Mammary epithelial cell (primary cell): ENCODE measurements at regions of chr10 and their contacts with region 1.

Region 1: GRCh38 chr10:6786579-6787031 is 206.5 kb upstream of the PRKCQ start:
- DNase-seq: peak; percentile 48
- H3K4me3 ChIP-seq: peak overlapping the region in 1 of 3 experiments; percentile 10
- H3K27ac ChIP-seq: no peak overlapping the region
- H3K4me1 ChIP-seq: peaks cover 22% of the 10 kb centered on the region
- H3K27me3 ChIP-seq: no peaks in the 10 kb centered on the region
- CTCF ChIP-seq: peak; percentile 48 to 66

Region 2: GRCh38 chr10:6542999-6543430 is 243.6 kb before region 1 on chr10:
- CTCF ChIA-PET with region 1: no interaction called
- dilution Hi-C with region 1: no loop called
- in situ Hi-C with region 1: no loop called
- intact Hi-C with region 1: no loop called
- DNase-seq: no peak
- H3K4me3 ChIP-seq: no peak overlapping the region
- H3K27ac ChIP-seq: no peak overlapping the region
- H3K4me1 ChIP-seq: no peaks in the 10 kb centered on the region
- H3K27me3 ChIP-seq: no peaks in the 10 kb centered on the region
- CTCF ChIP-seq: no peak

Region 3: DNA sequence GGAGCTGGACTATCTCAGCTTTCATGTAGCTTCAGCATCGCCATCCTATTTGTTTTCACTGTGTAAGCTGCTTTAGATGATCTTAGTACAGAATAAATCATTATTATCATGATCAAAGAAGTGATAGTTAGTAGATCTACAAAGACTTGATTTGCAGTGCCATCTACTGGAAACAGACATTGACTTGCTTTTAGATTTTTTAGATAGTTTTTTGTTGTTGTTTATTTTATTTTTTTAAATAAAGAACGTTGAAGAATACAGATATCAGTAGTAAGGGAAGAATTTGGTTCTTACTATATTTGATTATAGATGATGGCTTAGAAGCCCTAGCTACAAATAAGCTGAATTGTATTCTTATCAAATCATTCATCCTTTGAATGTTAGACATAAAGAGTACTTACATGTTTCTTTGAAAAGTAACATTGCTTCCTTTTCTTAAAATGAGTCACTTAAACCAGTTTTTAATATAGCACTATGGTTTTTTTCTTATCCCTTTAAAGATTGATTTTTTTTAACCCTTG is 630.6 kb after region 1 on chr10:
- CTCF ChIA-PET with region 1: no interaction called
- dilution Hi-C with region 1: no loop called
- in situ Hi-C with region 1: no loop called
- intact Hi-C with region 1: loop called (anchors 2 kb)
- DNase-seq: no peak
- H3K4me3 ChIP-seq: no peak overlapping the region
- H3K27ac ChIP-seq: no peak overlapping the region
- H3K4me1 ChIP-seq: no peaks in the 10 kb centered on the region
- H3K27me3 ChIP-seq: peaks cover 16% of the 10 kb centered on the region
- CTCF ChIP-seq: peak in 1 of 2 donors; percentile 48